ENCODE measurements at regions of chr6 and their contacts with region 1.

Region 1: DNA sequence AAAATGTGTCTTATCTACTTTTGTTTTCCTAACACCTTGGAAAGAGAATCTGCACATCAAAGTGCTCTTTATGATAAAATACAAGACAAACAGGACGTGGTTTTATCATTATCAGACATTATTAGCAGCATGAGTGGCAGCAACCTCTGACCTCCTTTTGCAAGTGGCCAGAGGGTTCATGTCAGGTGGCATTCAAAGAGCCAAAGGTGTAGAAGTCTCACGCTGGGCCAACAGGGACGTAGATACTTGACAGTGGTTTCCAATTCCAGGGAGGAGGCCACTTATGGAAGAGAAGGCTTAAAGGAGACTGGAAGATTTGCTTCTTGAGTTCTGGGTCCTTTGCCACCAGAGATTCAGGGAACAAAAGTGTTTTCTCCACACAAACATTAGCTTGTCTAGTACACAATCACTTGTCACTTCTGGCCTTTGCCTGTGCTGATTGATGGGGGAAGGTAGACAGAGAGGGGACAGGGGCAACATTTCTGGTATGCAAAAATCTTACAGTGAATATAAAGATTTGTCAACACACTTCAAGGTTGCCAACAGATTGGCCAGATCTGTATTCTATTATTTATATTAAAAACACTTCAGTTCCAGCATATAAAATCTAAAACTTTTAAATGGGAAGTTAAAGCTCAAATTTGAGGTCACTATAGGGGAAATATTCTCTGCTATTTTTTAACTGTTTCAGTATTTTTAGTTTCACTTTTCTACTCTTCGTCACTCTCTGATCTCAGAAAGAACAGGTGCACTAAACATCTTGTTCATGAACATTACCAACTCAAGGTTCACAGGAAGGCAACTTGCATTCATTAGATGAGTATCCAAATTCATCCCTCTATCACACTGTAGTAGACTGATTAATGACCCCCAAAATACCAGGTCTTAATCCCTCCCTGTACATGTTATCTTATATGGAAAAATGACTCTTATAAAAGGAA is 52.1 kb upstream of the FBXO30 start:
- DNase-seq: no peak
- H3K4me3 Mint-ChIP-seq: peak overlapping the region; percentile 51
- H3K27ac Mint-ChIP-seq: no peak overlapping the region
- H3K4me1 Mint-ChIP-seq: peaks cover 24% of the 10 kb centered on the region
- H3K27me3 Mint-ChIP-seq: no peaks in the 10 kb centered on the region

Region 2: DNA sequence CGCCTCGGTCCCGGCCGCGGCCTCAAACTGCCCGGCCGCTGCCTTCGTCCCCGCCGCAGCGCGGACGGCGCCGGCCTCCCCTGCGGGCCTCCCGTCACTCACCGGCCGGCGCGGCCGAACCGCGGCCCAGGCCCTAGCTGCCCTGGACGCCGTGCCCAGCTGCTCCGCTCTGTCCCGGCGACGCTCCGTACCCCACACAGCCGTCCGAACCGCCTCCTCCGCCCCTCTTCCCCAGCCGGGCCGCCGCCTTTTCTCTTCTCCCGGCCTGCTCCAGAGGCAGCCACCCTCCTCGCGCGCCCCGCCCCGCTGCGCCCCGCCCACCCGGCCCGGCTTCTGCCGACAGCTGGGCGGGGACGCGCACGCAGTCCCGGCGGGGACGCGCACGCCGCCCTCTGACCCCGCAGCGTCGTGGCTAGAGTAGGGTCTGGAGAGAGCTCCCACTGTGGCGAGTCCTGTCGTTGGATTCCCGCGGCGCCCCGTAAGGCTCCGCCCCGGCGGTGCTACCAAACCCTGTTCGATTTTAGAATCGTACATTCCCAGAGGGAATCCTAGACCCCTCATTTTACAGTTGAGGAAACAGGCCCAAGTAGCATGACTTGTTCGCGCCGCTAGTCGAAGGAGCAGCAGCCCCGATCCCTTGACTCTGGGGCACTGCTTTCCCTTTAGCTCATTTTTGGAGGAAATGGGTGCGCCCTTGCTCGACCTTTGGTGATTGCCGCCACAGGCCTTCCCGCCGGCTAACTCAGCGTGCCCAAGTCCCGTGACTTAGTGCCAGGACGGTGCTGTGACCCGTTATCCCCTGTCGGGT is 52.0 kb before region 1 on chr6 and contains the start of gene FBXO30:
- intact Hi-C with region 1: no loop called
- DNase-seq: peak; percentile 97
- H3K4me3 Mint-ChIP-seq: peak within 1 kb of the TSS; percentile 90
- H3K27ac Mint-ChIP-seq: peak within 1 kb of the TSS; percentile 90
- H3K4me1 Mint-ChIP-seq: peaks cover 29% of the 10 kb centered on the region
- H3K27me3 Mint-ChIP-seq: no peaks in the 10 kb centered on the region
- total RNA-seq, gene FBXO30: 6.3 and 6.6 TPM in 2 replicates

Region 3: GRCh38 chr6:145829102-145829501 is 37.6 kb before region 1 on chr6:
- intact Hi-C with region 1: loop called (anchors 5 kb)
- DNase-seq: no peak
- H3K4me3 Mint-ChIP-seq: no peak overlapping the region
- H3K27ac Mint-ChIP-seq: no peak overlapping the region
- H3K4me1 Mint-ChIP-seq: peaks cover 4% of the 10 kb centered on the region
- H3K27me3 Mint-ChIP-seq: peaks cover 3% of the 10 kb centered on the region